CD4-positive, alpha-beta T cell (primary cell): ENCODE measurements at regions of chr17 and their contacts with region 1.

Region 1: DNA sequence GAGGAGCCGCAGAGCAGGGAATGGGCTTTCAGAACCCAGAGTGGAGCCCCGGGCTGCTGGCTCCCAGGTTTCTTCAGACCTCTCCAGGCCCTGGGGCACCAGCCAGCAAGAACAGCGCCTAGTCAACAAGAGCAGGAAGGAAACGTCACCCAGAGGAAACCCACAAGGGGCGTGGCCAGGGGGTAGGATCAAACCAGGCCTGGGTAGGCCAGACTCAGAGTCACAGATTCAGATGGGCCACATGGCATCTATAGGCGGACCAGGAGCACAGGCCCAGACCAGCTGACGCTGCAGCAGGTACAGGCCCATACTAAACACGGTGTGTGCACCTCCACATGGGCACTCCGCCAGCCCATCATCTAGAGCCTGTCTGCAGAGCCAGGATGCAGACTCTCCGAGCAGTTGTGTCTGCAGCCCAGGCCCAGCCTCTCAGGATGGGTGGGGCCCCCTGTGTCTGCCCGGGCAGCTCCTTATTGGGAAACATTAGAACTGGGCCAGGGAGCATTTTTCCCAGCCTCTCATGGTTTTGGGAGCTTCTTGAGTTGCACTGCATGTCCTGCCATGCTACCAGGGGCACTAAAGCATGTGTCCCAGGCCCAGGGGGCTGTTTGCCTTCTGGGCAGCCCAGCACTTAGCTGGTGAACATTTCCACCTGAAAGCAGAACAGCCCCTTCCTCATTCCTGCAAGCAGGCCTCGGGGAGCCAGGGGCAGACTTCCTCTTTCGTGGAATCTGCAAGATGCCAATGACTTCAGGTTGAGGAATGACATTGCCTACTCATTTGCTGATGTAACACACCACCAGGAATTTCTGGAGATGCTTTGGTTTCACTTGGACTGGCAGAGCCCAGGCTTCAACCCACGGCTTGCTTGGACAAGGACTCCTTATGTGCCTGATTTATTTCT is at the start of gene NLRP1:
- DNase-seq: peak; percentile 87 to 98 (median 94)
- ATAC-seq: peak; percentile 92
- H3K4me3 ChIP-seq: peak within 1 kb of the TSS; percentile 90
- H3K4me3 Mint-ChIP-seq: peak within 1 kb of the TSS; percentile 93
- H3K27ac ChIP-seq: peak within 1 kb of the TSS; percentile 84 to 92
- H3K27ac Mint-ChIP-seq: peak within 1 kb of the TSS; percentile 98
- H3K4me1 ChIP-seq: peaks cover 65% of the 10 kb centered on the region
- H3K4me1 Mint-ChIP-seq: peaks cover 74% of the 10 kb centered on the region
- H3K27me3 ChIP-seq: no peaks in the 10 kb centered on the region
- H3K27me3 Mint-ChIP-seq: no peaks in the 10 kb centered on the region
- CTCF ChIP-seq: no peak
- total RNA-seq, gene NLRP1: 254 to 258 TPM

Region 2: DNA sequence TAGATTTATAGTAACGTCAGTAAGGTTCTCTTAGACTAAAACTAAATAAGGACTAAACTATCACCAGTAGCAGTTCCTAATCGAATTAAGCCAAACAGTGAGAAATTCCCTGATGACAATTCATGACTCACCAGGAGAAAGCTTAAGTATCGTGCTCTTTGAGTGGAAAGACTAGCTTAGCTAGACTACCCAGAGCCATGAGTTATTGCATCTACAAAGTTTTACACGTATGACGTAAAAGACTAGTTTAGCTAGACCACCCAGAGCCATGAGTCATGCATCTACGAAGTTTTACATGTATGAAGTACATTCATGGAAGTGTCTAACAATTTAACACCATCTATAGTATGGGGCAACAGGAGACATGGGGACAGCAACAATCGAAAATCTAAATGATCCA is 1254.8 kb before region 1 on chr17:
- CTCF ChIA-PET with region 1: no interaction called
- POLR2A ChIA-PET with region 1: no interaction called
- intact Hi-C with region 1: no loop called
- DNase-seq: no peak
- ATAC-seq: no peak
- H3K4me3 ChIP-seq: no peak overlapping the region
- H3K4me3 Mint-ChIP-seq: no peak overlapping the region
- H3K27ac ChIP-seq: no peak overlapping the region
- H3K27ac Mint-ChIP-seq: no peak overlapping the region
- H3K4me1 ChIP-seq: peaks cover 17% of the 10 kb centered on the region
- H3K4me1 Mint-ChIP-seq: peaks cover 67% of the 10 kb centered on the region
- H3K27me3 ChIP-seq: no peaks in the 10 kb centered on the region
- H3K27me3 Mint-ChIP-seq: no peaks in the 10 kb centered on the region
- CTCF ChIP-seq: no peak

Region 3: DNA sequence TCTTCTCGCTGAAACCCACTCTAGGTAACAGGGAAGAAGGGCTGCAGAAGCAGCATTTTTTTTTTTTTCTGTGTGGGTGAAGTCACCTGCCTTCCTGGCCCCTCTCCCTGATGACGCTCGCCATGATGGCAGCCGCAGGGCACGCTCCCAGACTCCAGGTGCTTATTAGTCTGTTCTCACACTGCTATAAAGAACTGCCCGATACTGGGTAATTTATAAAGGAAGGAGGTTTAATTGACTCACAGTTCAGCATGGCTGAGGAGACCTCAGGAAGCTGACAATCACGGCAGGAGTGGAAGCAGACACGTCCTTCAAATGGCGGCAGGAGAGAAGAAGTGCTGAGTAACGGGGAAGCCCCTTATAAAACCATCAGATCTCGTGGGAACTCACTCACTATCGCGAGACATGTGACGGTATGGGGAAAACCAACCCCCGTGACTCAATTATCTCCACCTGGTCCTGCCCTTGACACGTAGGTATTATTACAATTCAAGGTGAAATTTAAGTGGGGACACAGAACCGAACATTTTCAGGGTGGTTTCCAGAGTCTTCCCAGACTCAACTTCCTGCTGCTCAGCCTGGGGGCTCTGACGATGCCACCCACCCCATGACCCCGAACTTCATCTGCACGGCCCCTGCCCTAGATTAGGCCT is 34.6 kb after region 1 on chr17:
- CTCF ChIA-PET with region 1: no interaction called
- POLR2A ChIA-PET with region 1: no interaction called
- intact Hi-C with region 1: no loop called
- DNase-seq: peak in 2 of 14 experiments; percentile 9 to 35
- ATAC-seq: no peak
- H3K4me3 ChIP-seq: no peak overlapping the region
- H3K4me3 Mint-ChIP-seq: no peak overlapping the region
- H3K27ac ChIP-seq: no peak overlapping the region
- H3K27ac Mint-ChIP-seq: no peak overlapping the region
- H3K4me1 ChIP-seq: no peaks in the 10 kb centered on the region
- H3K4me1 Mint-ChIP-seq: no peaks in the 10 kb centered on the region
- H3K27me3 ChIP-seq: peaks cover 17 to 23% of the 10 kb centered on the region in 2 experiments
- H3K27me3 Mint-ChIP-seq: peaks cover 43% of the 10 kb centered on the region
- CTCF ChIP-seq: no peak

Region 4: DNA sequence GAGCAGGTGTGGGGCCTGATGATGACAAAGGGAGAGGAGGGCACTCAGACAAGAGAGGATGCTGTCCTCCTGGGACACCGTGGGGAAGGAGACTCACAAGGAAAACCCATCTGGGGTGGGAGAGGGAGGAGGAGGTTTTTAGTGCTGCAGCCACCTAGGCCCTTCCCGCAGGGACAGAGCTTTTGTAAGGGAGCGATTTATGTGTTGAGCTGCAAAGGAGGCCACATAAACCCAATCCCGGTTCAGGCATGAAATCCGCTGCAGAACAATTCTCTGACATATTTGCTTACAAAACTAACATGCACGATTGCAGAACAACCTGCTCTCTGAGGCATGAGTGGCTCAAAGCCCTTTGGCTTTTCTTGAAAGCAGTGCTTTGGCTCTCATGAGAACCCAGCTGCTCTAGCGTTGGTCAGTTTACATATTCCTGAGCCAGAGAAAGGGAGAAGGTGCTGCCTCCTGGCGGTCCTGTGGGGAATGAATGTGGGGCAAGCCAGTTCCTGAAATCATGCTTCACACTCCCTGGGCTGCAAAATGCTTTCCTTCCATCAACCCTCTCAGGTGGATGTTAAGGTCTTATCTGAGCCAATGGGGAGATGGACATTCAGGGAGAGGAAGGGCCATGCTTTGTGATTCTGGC is 122.1 kb after region 1 on chr17:
- CTCF ChIA-PET with region 1: interaction called, 12 read pairs
- POLR2A ChIA-PET with region 1: interaction called, 3 read pairs
- intact Hi-C with region 1: loop called (anchors 1 kb)
- DNase-seq: peak; percentile 29 to 73 (median 48)
- ATAC-seq: no peak
- H3K4me3 ChIP-seq: no peak overlapping the region
- H3K4me3 Mint-ChIP-seq: no peak overlapping the region
- H3K27ac ChIP-seq: no peak overlapping the region
- H3K27ac Mint-ChIP-seq: no peak overlapping the region
- H3K4me1 ChIP-seq: no peaks in the 10 kb centered on the region
- H3K4me1 Mint-ChIP-seq: no peaks in the 10 kb centered on the region
- H3K27me3 ChIP-seq: peaks cover 2 to 18% of the 10 kb centered on the region in 2 experiments
- H3K27me3 Mint-ChIP-seq: peaks cover 57% of the 10 kb centered on the region
- CTCF ChIP-seq: peak; percentile 51

Region 5: DNA sequence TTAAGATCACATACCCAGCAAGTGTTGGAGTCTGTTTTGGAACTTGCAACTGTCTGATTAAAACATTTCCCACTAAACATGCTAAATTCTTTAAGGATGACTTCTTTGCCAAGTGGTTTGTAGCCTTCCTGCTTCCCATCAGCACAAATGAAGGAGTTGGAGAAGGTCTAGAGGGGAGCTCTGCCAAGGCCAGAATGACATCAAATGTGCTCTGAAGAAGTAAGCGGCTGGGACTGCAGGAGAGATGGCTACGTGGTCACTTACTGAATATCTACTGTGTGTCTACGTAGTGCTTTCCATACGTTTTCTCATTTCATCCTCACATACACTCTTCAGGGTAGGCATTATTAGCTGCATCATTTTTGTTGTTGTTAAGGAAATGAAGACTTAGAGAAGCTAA is 135.3 kb after region 1 on chr17:
- CTCF ChIA-PET with region 1: no interaction called
- POLR2A ChIA-PET with region 1: no interaction called
- intact Hi-C with region 1: no loop called
- DNase-seq: no peak
- ATAC-seq: no peak
- H3K4me3 ChIP-seq: no peak overlapping the region
- H3K4me3 Mint-ChIP-seq: no peak overlapping the region
- H3K27ac ChIP-seq: no peak overlapping the region
- H3K27ac Mint-ChIP-seq: no peak overlapping the region
- H3K4me1 ChIP-seq: no peaks in the 10 kb centered on the region
- H3K4me1 Mint-ChIP-seq: no peaks in the 10 kb centered on the region
- H3K27me3 ChIP-seq: peaks cover 7 to 16% of the 10 kb centered on the region in 2 experiments
- H3K27me3 Mint-ChIP-seq: peaks cover 62% of the 10 kb centered on the region
- CTCF ChIP-seq: no peak

Region 6: GRCh38 chr17:6435968-6436367 is 851.3 kb after region 1 on chr17:
- CTCF ChIA-PET with region 1: interaction called, 12 read pairs
- POLR2A ChIA-PET with region 1: interaction called, 5 read pairs
- intact Hi-C with region 1: loop called (anchors 1 kb)
- DNase-seq: peak; percentile 42 to 83 (median 55)
- ATAC-seq: peak; percentile 99
- H3K4me3 ChIP-seq: no peak overlapping the region
- H3K4me3 Mint-ChIP-seq: no peak overlapping the region
- H3K27ac ChIP-seq: no peak overlapping the region
- H3K27ac Mint-ChIP-seq: no peak overlapping the region
- H3K4me1 ChIP-seq: peaks cover 3% of the 10 kb centered on the region
- H3K4me1 Mint-ChIP-seq: peaks cover 5% of the 10 kb centered on the region
- H3K27me3 ChIP-seq: peaks cover 5 to 11% of the 10 kb centered on the region in 2 experiments
- H3K27me3 Mint-ChIP-seq: peaks cover 37% of the 10 kb centered on the region
- CTCF ChIP-seq: peak; percentile 77

Region 7: GRCh38 chr17:6843241-6843880 is 1258.7 kb after region 1 on chr17:
- CTCF ChIA-PET with region 1: no interaction called
- POLR2A ChIA-PET with region 1: no interaction called
- intact Hi-C with region 1: loop called in 1 of 2 experiments (anchors 5 kb)
- DNase-seq: peak in 3 of 14 experiments; percentile 45 to 68 (median 68)
- ATAC-seq: no peak
- H3K4me3 ChIP-seq: no peak overlapping the region
- H3K4me3 Mint-ChIP-seq: no peak overlapping the region
- H3K27ac ChIP-seq: no peak overlapping the region
- H3K27ac Mint-ChIP-seq: no peak overlapping the region
- H3K4me1 ChIP-seq: no peaks in the 10 kb centered on the region
- H3K4me1 Mint-ChIP-seq: no peaks in the 10 kb centered on the region
- H3K27me3 ChIP-seq: peaks cover 13 to 24% of the 10 kb centered on the region in 2 experiments
- H3K27me3 Mint-ChIP-seq: peaks cover 55% of the 10 kb centered on the region
- CTCF ChIP-seq: peak; percentile 74